AG04450 (cell line): ENCODE measurements at regions of chr12 and their contacts with region 1.

Region 1: GRCh38 chr12:48957141-48958048 is at the start of gene ARF3:
- DNase-seq: peak; percentile 76
- H3K4me3 ChIP-seq: peak within 1 kb of the TSS; percentile 97
- H3K27ac ChIP-seq: peak within 1 kb of the TSS; percentile 80
- H3K27me3 ChIP-seq: peaks cover 5% of the 10 kb centered on the region
- CTCF ChIP-seq: no peak
- polyA plus RNA-seq, gene ARF3: 260 TPM in 2 replicates

Region 2: GRCh38 chr12:48936379-48936979 is 20.9 kb before region 1 on chr12:
- CTCF ChIA-PET with region 1: interaction called, 14 read pairs
- POLR2A ChIA-PET with region 1: no interaction called
- DNase-seq: peak; percentile 59
- H3K4me3 ChIP-seq: no peak overlapping the region
- H3K27ac ChIP-seq: no peak overlapping the region
- H3K27me3 ChIP-seq: no peaks in the 10 kb centered on the region
- CTCF ChIP-seq: peak; percentile 95

Region 3: DNA sequence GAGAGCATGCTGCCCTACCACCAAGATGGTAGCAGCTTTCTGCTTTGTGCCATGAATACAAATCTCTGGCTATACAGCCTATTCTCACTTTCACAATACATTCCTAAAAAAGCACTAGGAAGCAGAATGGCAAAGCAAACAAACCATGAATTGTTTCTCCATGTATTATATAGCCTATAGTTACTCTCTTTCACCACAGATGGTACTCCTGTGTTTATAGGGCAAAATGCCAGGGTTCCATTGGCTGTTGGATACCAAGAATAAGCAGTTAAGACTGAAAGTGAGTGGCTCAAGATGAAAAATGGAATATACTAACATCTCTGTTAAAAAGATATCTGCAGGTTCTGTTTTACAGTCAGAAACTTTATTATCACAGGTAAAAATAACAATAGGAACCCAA is 11.2 kb before region 1 on chr12:
- CTCF ChIA-PET with region 1: interaction called, 6 read pairs
- POLR2A ChIA-PET with region 1: interaction called, 11 read pairs
- DNase-seq: peak; percentile 45
- H3K4me3 ChIP-seq: no peak overlapping the region
- H3K27ac ChIP-seq: no peak overlapping the region
- H3K27me3 ChIP-seq: no peaks in the 10 kb centered on the region
- CTCF ChIP-seq: no peak

Region 4: DNA sequence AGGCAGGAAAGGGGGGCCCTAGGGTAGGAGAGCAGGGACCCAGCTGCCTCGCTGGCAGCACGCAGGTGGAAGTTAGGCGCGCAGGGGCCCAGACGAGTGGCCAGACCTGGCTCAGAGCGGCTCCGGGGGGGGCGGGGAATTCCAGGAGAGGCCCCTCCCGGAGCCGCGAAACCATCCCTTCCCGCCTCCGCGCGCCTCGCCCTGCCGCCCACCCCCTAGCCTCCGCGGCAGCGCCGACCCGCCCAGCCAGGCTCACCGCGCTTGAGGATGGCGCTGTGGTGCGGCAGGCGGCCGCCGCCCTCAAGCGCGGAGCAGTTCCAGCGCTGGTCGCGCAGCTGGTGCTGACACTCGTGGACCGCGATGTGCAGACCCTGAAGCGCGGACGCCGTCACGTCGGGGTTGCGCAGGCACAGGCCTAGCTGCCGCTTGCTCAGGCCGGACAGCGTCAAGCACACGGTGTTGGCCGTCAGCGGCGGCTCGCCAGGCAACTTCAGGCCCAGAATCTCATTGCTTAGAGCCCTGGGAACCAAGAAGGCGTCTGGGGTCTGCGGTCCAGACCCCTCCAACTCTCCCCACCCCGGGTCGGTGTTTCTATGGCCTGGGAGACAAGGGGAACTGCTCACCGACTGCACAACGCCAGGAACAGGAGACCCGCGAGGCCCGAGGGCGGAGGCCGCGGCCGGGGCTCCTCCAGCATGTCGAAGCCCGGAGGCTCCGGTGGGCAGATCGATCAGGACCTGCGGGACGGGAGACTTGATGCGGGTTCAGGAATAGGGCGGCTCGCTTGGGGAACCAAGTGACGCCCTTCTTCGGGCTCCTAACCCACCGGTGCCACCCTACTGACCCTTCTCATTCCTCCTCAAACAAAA is 12.7 kb after region 1 on chr12:
- CTCF ChIA-PET with region 1: interaction called, 3 read pairs
- POLR2A ChIA-PET with region 1: interaction called, 13 read pairs
- DNase-seq: no peak
- H3K4me3 ChIP-seq: no peak overlapping the region; the same call in 1 of the 2 replicates
- H3K27ac ChIP-seq: no peak overlapping the region
- H3K27me3 ChIP-seq: peaks cover 41% of the 10 kb centered on the region
- CTCF ChIP-seq: no peak

Region 5: GRCh38 chr12:48988030-48988649 is 30.7 kb after region 1 on chr12:
- CTCF ChIA-PET with region 1: interaction called, 11 read pairs
- POLR2A ChIA-PET with region 1: interaction called, 3 read pairs
- DNase-seq: no peak
- H3K4me3 ChIP-seq: no peak overlapping the region
- H3K27ac ChIP-seq: no peak overlapping the region
- H3K27me3 ChIP-seq: peaks cover 61% of the 10 kb centered on the region
- CTCF ChIP-seq: peak; percentile 87